Adrenal gland (tissue), 19 donors: ENCODE measurements at regions of chr9 and their contacts with region 1.

Region 1: DNA sequence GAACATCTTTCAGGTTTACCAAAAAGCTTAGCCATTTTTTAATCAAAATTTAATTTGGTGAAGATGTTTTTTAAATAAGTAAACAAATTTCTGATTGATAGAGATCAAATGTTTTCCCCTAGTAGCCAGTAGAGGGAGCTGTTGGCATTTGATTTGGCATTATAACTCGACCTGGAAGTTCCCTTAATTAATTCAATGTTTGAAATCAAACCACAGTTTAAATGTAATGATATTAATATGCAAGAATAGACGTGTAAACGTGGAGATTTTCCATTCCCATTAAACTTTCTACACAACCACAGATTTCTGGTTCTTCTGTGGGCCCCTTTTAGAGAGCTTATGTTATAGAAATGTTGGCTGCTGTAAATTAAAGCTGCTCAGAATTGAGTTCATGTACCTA is 148.1 kb upstream of the MPDZ start:
- DNase-seq: no peak
- H3K4me3 ChIP-seq: no peak overlapping the region
- H3K27ac ChIP-seq: no peak overlapping the region
- H3K4me1 ChIP-seq: no peaks in the 10 kb centered on the region
- H3K27me3 ChIP-seq: no peaks in the 10 kb centered on the region
- CTCF ChIP-seq: peak; percentile 55 to 75 (median 68)
- POLR2A ChIP-seq: no peak

Region 2: GRCh38 chr9:13351778-13352386 is 75.7 kb before region 1 on chr9:
- intact Hi-C with region 1: loop called in 1 of 2 experiments (anchors 10 kb)
- DNase-seq: peak in 4 of 7 donors; percentile 13 to 28 (median 26)
- H3K4me3 ChIP-seq: no peak overlapping the region
- H3K27ac ChIP-seq: no peak overlapping the region
- H3K4me1 ChIP-seq: peaks cover 0 to 10% of the 10 kb centered on the region in 2 donors
- H3K27me3 ChIP-seq: no peaks in the 10 kb centered on the region
- CTCF ChIP-seq: peak; percentile 49 to 75 (median 62)
- POLR2A ChIP-seq: no peak

Region 3: GRCh38 chr9:14353222-14354056 is 925.9 kb after region 1 on chr9:
- intact Hi-C with region 1: loop called in 1 of 2 experiments (anchors 5 kb)
- DNase-seq: peak; percentile 84 to 97 (median 92)
- H3K4me3 ChIP-seq: peak overlapping the region in 1 of 4 donors; percentile 1
- H3K27ac ChIP-seq: peak overlapping the region in 1 of 5 donors; percentile 4
- H3K4me1 ChIP-seq: peaks cover 0 to 4% of the 10 kb centered on the region in 2 donors
- H3K27me3 ChIP-seq: peaks cover 18% of the 10 kb centered on the region
- CTCF ChIP-seq: peak; percentile 79 to 92 (median 91)
- POLR2A ChIP-seq: no peak